CD4-positive, alpha-beta memory T cell (primary cell): ENCODE measurements at regions of chr4 and their contacts with region 1.

Region 1: GRCh38 chr4:78775303-78776030 is 683 bp upstream of the BMP2K start:
- DNase-seq: peak; percentile 83 to 90 (median 89)
- H3K4me3 ChIP-seq: peak overlapping the region; percentile 79 to 91
- H3K4me3 Mint-ChIP-seq: peak overlapping the region; percentile 93 to 96 (median 95)
- H3K27ac ChIP-seq: peak overlapping the region; percentile 77
- H3K27ac Mint-ChIP-seq: peak overlapping the region; percentile 92 to 98 (median 96)
- H3K4me1 ChIP-seq: peaks cover 13% of the 10 kb centered on the region
- H3K4me1 Mint-ChIP-seq: peaks cover 12 to 22% (median 15%) of the 10 kb centered on the region in 4 donors
- H3K27me3 ChIP-seq: no peaks in the 10 kb centered on the region
- H3K27me3 Mint-ChIP-seq: no peaks in the 10 kb centered on the region

Region 2: DNA sequence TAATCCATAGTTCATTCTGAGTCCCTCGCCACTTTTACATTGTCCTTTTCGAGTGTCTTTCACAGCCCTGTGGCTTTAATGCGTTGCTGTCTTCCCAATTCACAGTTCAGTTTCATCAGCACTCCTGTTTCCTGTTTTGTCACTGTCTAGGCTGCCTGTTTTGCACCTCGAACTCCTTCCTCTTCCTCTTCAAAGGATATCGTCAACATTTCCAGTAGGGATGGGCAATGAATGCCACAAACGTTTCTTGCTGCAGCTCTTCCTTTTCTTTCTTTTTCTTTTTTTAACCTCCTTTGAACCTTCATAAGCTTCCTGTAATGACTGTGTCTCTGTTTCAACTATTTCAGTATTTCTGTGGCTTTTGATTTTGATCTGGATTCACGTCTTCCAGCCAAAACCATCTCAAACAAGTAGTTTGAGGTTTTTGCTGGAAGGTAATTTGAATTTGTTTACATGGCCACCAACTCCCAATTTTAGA is 118.5 kb before region 1 on chr4:
- CTCF ChIA-PET with region 1: no interaction called
- POLR2A ChIA-PET with region 1: no interaction called
- intact Hi-C with region 1: loop called (anchors 5 kb)
- DNase-seq: peak in 3 of 5 donors; percentile 13 to 20 (median 14)
- H3K4me3 ChIP-seq: peak overlapping the region in 1 of 2 donors; percentile 13
- H3K4me3 Mint-ChIP-seq: peak overlapping the region; percentile 63 to 83 (median 78)
- H3K27ac ChIP-seq: no peak overlapping the region
- H3K27ac Mint-ChIP-seq: peak overlapping the region; percentile 1 to 86 (median 21)
- H3K4me1 ChIP-seq: peaks cover 26% of the 10 kb centered on the region
- H3K4me1 Mint-ChIP-seq: peaks cover 20 to 24% (median 24%) of the 10 kb centered on the region in 4 donors
- H3K27me3 ChIP-seq: no peaks in the 10 kb centered on the region
- H3K27me3 Mint-ChIP-seq: no peaks in the 10 kb centered on the region

Region 3: DNA sequence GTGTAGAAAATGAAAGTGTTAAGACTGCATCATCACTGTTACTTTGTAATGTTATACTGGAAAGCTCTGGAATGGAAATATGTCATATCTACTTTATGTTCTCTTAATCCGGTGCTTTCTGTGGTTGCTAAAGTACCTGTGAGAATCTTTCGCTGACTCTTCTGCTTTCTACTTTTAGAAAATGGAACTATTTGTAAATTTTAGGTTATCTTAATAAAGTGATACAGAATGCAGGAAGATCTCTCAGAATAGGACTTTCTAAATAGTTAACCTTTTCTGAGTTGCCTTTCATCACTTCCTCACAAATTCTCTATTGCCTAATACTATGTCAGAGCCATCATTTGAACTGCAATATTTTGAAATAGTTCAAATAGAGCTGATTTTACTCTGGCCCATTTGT is 70.0 kb after region 1 on chr4:
- CTCF ChIA-PET with region 1: no interaction called
- POLR2A ChIA-PET with region 1: no interaction called
- intact Hi-C with region 1: loop called (anchors 5 kb)
- DNase-seq: no peak
- H3K4me3 ChIP-seq: no peak overlapping the region
- H3K4me3 Mint-ChIP-seq: no peak overlapping the region
- H3K27ac ChIP-seq: no peak overlapping the region
- H3K27ac Mint-ChIP-seq: no peak overlapping the region
- H3K4me1 ChIP-seq: no peaks in the 10 kb centered on the region
- H3K4me1 Mint-ChIP-seq: no peaks in the 10 kb centered on the region
- H3K27me3 ChIP-seq: no peaks in the 10 kb centered on the region
- H3K27me3 Mint-ChIP-seq: no peaks in the 10 kb centered on the region

Region 4: DNA sequence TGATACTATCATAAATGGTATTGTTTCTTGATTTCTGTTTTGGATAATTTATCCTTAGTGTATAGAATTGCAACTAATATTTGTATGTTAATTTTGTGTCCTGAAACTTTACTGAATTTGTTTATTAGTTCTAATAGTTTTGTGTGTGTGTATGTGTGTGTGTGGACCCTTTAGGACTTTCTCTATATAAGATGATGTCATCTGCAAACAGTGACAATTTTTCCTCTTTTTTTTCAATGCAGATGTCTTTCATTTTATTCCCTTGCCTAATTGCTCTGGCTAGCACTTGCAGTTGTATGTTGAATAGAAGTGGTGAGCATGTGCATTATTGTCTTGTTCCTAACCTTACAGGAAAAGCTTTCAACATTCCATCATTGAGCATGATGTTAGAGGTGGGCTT is 320.2 kb after region 1 on chr4:
- CTCF ChIA-PET with region 1: no interaction called
- POLR2A ChIA-PET with region 1: no interaction called
- intact Hi-C with region 1: no loop called
- DNase-seq: no peak
- H3K4me3 ChIP-seq: no peak overlapping the region
- H3K4me3 Mint-ChIP-seq: no peak overlapping the region
- H3K27ac ChIP-seq: no peak overlapping the region
- H3K27ac Mint-ChIP-seq: no peak overlapping the region
- H3K4me1 ChIP-seq: no peaks in the 10 kb centered on the region
- H3K4me1 Mint-ChIP-seq: no peaks in the 10 kb centered on the region
- H3K27me3 ChIP-seq: no peaks in the 10 kb centered on the region
- H3K27me3 Mint-ChIP-seq: no peaks in the 10 kb centered on the region

Region 5: GRCh38 chr4:79255793-79256192 is 480.3 kb after region 1 on chr4:
- CTCF ChIA-PET with region 1: no interaction called
- POLR2A ChIA-PET with region 1: no interaction called
- intact Hi-C with region 1: no loop called
- DNase-seq: no peak
- H3K4me3 ChIP-seq: no peak overlapping the region
- H3K4me3 Mint-ChIP-seq: no peak overlapping the region
- H3K27ac ChIP-seq: no peak overlapping the region
- H3K27ac Mint-ChIP-seq: no peak overlapping the region
- H3K4me1 ChIP-seq: no peaks in the 10 kb centered on the region
- H3K4me1 Mint-ChIP-seq: no peaks in the 10 kb centered on the region
- H3K27me3 ChIP-seq: no peaks in the 10 kb centered on the region
- H3K27me3 Mint-ChIP-seq: no peaks in the 10 kb centered on the region

Region 6: GRCh38 chr4:80202190-80202711 is 1426.8 kb after region 1 on chr4:
- CTCF ChIA-PET with region 1: no interaction called
- POLR2A ChIA-PET with region 1: interaction called, 3 read pairs
- intact Hi-C with region 1: loop called (anchors 10 kb)
- DNase-seq: peak; percentile 72 to 81 (median 77)
- H3K4me3 ChIP-seq: peak overlapping the region; percentile 23 to 77
- H3K4me3 Mint-ChIP-seq: peak overlapping the region; percentile 82 to 94 (median 88)
- H3K27ac ChIP-seq: peak overlapping the region; percentile 82
- H3K27ac Mint-ChIP-seq: peak overlapping the region; percentile 89 to 93 (median 91)
- H3K4me1 ChIP-seq: peaks cover 17% of the 10 kb centered on the region
- H3K4me1 Mint-ChIP-seq: peaks cover 23 to 34% (median 27%) of the 10 kb centered on the region in 4 donors
- H3K27me3 ChIP-seq: no peaks in the 10 kb centered on the region
- H3K27me3 Mint-ChIP-seq: no peaks in the 10 kb centered on the region